Testis (tissue), 5 donors: ENCODE measurements at regions of chr7 and their contacts with region 1.

Region 1: GRCh38 chr7:116588641-116589594 is 64.1 kb downstream of the CAV1 start:
- DNase-seq: no peak
- H3K4me3 ChIP-seq: no peak overlapping the region
- H3K27ac ChIP-seq: no peak overlapping the region
- H3K4me1 ChIP-seq: no peaks in the 10 kb centered on the region
- H3K27me3 ChIP-seq: no peaks in the 10 kb centered on the region
- CTCF ChIP-seq: peak; percentile 57 to 70 (median 69)
- POLR2A ChIP-seq: no peak

Region 2: DNA sequence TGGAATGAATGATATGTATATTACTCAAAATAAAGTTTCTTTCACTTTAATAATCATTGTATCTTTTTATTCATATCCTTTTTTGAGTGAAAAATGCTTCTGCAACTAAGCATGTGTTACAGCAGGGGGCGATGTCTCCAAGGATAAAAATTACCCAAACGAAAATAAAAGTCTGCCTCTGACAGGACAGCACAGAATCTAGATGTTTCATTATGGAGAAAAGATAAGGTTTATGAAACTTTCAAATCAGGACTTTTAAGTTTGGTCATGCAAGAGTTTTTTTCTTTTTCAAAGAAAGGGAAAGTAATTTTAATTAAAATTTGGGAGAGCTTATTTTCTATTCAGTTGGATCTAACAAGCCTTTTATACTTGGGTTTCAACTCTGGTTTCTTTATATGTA is 330.2 kb before region 1 on chr7:
- intact Hi-C with region 1: loop called (anchors 5 kb)
- DNase-seq: peak; percentile 28
- H3K4me3 ChIP-seq: no peak overlapping the region
- H3K27ac ChIP-seq: no peak overlapping the region
- H3K4me1 ChIP-seq: no peaks in the 10 kb centered on the region
- H3K27me3 ChIP-seq: no peaks in the 10 kb centered on the region
- CTCF ChIP-seq: peak; percentile 73 to 95 (median 88)
- POLR2A ChIP-seq: no peak

Region 3: DNA sequence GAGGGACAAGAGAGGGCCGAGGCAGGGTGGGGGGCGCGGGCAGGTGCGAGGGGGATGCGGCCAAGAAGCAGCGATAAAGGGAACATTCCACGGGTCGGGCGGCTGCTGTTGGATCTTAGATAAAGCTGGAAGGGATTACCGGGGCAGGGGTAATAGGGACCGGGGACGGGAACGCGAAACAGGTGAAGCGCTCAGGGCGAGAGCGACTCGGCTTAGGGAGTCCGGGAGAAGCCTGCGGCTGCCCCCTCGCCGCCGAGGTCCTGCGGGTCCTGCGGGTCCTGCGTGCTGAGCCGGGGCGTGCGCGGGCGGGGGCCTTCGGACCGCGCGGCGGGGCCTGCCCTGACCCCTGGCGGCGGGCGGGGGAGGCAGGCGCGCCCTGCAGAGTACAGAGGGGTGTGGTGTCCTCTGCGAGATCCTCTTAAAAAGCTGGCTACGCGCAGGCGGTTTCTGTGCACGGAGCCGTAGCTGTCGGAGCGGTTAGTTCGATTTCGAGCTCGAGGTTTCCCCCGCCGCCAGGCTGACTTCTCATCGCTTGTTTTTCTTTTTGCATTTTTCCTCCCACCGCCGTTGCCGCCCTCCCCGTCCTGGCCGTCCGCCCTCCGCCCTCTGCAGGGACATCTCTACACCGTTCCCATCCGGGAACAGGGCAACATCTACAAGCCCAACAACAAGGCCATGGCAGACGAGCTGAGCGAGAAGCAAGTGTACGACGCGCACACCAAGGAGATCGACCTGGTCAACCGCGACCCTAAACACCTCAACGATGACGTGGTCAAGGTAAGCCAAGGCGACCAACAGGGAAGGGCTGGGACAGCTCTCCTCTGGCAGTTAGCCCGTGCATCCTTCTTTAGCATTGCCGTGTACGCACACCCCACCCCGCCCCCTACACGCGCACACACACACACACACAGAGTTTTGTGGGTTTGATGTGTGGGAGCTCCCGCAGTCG is 62.7 kb before region 1 on chr7:
- intact Hi-C with region 1: loop called (anchors 5 kb)
- DNase-seq: peak; percentile 79
- H3K4me3 ChIP-seq: peak overlapping the region; percentile 67 to 78
- H3K27ac ChIP-seq: peak overlapping the region; percentile 82 to 94
- H3K4me1 ChIP-seq: peaks cover 11% of the 10 kb centered on the region
- H3K27me3 ChIP-seq: no peaks in the 10 kb centered on the region
- CTCF ChIP-seq: peak; percentile 70 to 82 (median 76)
- POLR2A ChIP-seq: no peak

Region 4: GRCh38 chr7:116671681-116672595 is 83.0 kb after region 1 on chr7 and contains the start of gene MET:
- intact Hi-C with region 1: no loop called
- DNase-seq: peak; percentile 60
- H3K4me3 ChIP-seq: peak within 1 kb of the TSS; percentile 54 to 61
- H3K27ac ChIP-seq: no peak within 1 kb of the TSS
- H3K4me1 ChIP-seq: peaks cover 11% of the 10 kb centered on the region
- H3K27me3 ChIP-seq: no peaks in the 10 kb centered on the region
- CTCF ChIP-seq: peak in 1 of 3 experiments; percentile 34
- POLR2A ChIP-seq: no peak
- total RNA-seq, gene MET: 2.0 to 3.2 TPM

Region 5: GRCh38 chr7:116752305-116753074 is 163.6 kb after region 1 on chr7:
- intact Hi-C with region 1: no loop called
- DNase-seq: no peak
- H3K4me3 ChIP-seq: no peak overlapping the region
- H3K27ac ChIP-seq: no peak overlapping the region
- H3K4me1 ChIP-seq: no peaks in the 10 kb centered on the region
- H3K27me3 ChIP-seq: no peaks in the 10 kb centered on the region
- CTCF ChIP-seq: no peak
- POLR2A ChIP-seq: no peak

Region 6: DNA sequence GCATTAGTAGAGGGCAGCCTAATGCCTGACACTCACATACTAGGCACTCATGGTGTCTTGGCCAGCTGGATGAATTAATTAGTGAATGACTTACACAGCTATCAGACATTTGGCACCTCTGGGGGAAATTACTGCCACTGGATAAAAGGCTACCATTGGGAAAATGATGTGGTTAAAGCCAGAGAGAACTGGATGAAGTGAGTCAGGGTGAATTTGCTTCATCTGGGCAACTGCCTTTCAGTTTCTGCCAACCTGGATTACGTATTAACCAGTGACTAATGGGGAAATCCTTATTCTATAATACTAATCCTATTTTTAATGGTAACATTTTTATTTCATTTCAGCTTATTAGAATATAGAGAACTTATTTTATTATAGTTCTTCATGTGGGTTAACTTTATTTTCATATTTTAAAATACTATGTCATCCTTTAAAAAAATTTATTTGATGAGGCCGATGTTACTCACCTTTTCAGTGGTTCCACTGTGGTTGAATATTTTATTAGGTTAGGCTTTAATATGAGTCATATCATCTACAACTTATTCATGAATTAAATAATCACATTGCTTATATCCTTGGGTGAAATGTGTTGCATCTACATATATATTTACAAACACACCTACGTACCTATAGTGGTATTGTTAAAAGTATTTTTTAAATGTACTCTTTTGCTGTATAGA is 187.8 kb after region 1 on chr7:
- intact Hi-C with region 1: no loop called
- DNase-seq: no peak
- H3K4me3 ChIP-seq: no peak overlapping the region
- H3K27ac ChIP-seq: no peak overlapping the region
- H3K4me1 ChIP-seq: no peaks in the 10 kb centered on the region
- H3K27me3 ChIP-seq: no peaks in the 10 kb centered on the region
- CTCF ChIP-seq: no peak
- POLR2A ChIP-seq: no peak

Region 7: GRCh38 chr7:116809636-116810266 is 220.8 kb after region 1 on chr7:
- intact Hi-C with region 1: loop called (anchors 5 kb)
- DNase-seq: peak; percentile 17
- H3K4me3 ChIP-seq: no peak overlapping the region
- H3K27ac ChIP-seq: no peak overlapping the region
- H3K4me1 ChIP-seq: no peaks in the 10 kb centered on the region
- H3K27me3 ChIP-seq: no peaks in the 10 kb centered on the region
- CTCF ChIP-seq: peak; percentile 21 to 52 (median 29)
- POLR2A ChIP-seq: no peak